Pancreas (tissue), 10 donors: ENCODE measurements at regions of chr19 and their contacts with region 1.

Region 1: DNA sequence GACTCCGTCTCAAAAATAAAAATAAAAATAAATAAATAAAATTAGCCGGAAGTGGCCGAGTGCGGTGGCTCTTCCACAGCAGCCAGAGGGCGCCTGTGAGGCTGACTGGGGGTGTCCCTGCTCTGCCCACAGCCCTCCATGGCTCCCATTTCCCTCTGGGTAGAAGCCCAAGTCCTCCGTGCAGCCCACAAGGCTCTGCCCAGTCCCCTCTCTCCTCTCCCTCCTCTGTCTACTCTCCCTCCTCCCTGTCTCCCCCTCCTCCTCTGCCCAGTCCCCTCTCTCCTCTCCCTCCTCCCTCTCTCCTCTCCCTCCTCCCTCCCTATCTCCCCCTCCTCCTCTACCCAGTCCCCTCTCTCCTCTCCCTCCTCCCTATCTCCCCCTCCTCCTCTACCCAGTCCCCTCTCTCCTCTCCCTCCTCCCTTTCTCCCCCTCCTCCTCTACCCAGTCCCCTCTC is 20.4 kb downstream of the MISP start:
- DNase-seq: peak in 2 of 6 donors; percentile 43 to 49
- ATAC-seq: no peak
- H3K4me3 ChIP-seq: no peak overlapping the region
- H3K27ac ChIP-seq: no peak overlapping the region
- H3K4me1 ChIP-seq: no peaks in the 10 kb centered on the region
- H3K27me3 ChIP-seq: no peaks in the 10 kb centered on the region
- CTCF ChIP-seq: no peak

Region 2: DNA sequence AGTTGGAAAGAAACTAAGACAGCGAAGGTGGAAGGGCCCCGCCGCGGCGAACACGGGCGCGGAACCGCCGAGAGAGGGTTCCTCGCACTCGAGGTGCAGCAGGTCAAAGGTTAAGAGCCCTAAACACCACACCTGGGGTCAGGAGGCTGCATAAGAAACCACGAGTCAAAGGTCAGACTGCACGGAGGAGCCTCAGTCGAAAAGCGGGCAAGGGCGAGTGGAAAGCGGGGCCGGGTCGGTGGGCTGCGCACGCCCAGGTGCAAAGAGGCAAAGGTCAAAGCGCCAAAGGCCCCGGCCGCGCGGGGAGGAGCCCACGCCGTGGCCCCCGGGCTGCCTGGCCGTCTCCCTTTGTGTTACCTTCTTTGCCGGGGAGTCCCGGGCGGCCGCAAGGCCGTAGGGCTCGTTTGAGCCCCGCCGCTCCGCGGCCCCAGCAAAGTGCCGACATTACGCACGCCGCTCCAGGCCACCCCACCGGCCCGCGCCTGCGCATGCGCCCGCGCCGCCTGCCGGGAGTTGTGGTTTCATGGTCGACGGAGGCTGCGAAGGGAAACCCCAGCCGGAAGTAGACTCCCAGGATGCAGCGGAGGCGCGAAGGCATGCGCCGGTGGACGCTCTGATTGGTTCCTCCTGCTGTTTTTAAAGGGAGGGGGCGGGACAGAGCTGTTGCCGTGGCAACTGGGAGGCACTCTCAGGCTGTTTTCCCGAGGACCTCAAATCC is 138.1 kb before region 1 on chr19 and contains the start of gene POLRMT:
- intact Hi-C with region 1: no loop called
- DNase-seq: peak; percentile 97 to 100 (median 98)
- ATAC-seq: peak; percentile 97 to 98 (median 98)
- H3K4me3 ChIP-seq: peak within 1 kb of the TSS; percentile 74 to 99 (median 84)
- H3K27ac ChIP-seq: no peak within 1 kb of the TSS
- H3K4me1 ChIP-seq: peaks cover 0 to 5% (median 4%) of the 10 kb centered on the region in 3 donors
- H3K27me3 ChIP-seq: no peaks in the 10 kb centered on the region
- CTCF ChIP-seq: no peak
- total RNA-seq, gene POLRMT: 19.3 to 34.7 (median 24.7) TPM

Region 3: DNA sequence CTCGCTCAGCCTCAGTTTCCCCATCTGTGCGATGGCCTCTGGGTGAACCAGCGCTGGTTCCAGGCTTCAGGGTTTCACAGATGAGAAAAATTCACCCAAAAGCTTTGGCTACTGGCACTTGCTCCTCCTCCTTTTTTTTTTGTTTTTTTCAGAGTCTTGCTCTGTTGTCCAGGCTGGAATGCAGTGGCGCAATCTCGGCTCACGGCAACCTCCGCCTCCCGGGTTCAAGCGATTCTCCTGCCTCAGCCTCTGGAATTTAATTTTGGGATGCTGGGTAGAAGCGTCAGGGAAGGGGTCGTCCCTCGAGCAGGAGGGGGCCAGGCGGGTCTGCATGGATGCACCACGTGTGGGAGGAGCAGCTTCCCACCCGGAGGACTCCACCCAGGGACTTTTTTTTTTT is 83.1 kb before region 1 on chr19:
- intact Hi-C with region 1: no loop called
- DNase-seq: no peak
- ATAC-seq: no peak
- H3K4me3 ChIP-seq: no peak overlapping the region
- H3K27ac ChIP-seq: no peak overlapping the region
- H3K4me1 ChIP-seq: no peaks in the 10 kb centered on the region
- H3K27me3 ChIP-seq: no peaks in the 10 kb centered on the region
- CTCF ChIP-seq: no peak

Region 4: DNA sequence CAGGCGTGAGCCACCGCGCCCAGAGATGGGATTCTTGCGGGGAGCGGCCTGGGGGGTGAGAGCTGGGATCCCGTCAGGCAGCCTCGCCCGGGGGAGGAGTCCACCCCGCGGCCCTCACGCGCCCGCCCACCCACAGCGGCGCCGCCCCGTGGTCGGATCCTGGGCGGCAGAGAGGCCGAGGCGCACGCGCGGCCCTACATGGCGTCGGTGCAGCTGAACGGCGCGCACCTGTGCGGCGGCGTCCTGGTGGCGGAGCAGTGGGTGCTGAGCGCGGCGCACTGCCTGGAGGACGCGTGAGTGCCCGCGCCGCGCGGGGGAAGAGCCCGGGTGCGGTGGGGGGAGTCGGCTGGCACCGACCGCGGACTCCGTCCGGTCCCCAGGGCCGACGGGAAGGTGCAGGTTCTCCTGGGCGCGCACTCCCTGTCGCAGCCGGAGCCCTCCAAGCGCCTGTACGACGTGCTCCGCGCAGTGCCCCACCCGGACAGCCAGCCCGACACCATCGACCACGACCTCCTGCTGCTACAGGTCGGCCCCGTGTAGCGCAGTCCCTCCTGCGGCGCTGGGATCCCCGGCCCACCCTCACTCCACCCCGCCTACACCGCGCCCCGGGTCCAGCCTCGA is 89.2 kb after region 1 on chr19:
- intact Hi-C with region 1: loop called in 1 of 3 experiments (anchors 5 kb)
- DNase-seq: peak in 4 of 6 donors; percentile 65 to 83 (median 74)
- ATAC-seq: peak; percentile 42 to 60 (median 50)
- H3K4me3 ChIP-seq: peak overlapping the region in 3 of 4 donors; percentile 18 to 42 (median 28)
- H3K27ac ChIP-seq: no peak overlapping the region
- H3K4me1 ChIP-seq: peaks cover 0 to 3% (median 0%) of the 10 kb centered on the region in 3 donors
- H3K27me3 ChIP-seq: no peaks in the 10 kb centered on the region
- CTCF ChIP-seq: no peak

Region 5: GRCh38 chr19:913080-913748 is 141.9 kb after region 1 on chr19 and contains the start of gene R3HDM4:
- intact Hi-C with region 1: loop called in 1 of 3 experiments (anchors 5 kb)
- DNase-seq: peak; percentile 74 to 94 (median 84)
- ATAC-seq: peak; percentile 75 to 86 (median 79)
- H3K4me3 ChIP-seq: peak within 1 kb of the TSS; percentile 57 to 71 (median 66)
- H3K27ac ChIP-seq: peak within 1 kb of the TSS; percentile 70 to 92 (median 85)
- H3K4me1 ChIP-seq: peaks cover 8 to 29% (median 15%) of the 10 kb centered on the region in 3 donors
- H3K27me3 ChIP-seq: peaks cover 0 to 3% (median 0%) of the 10 kb centered on the region in 4 donors
- CTCF ChIP-seq: no peak
- total RNA-seq, gene R3HDM4: 21.6 to 36.7 (median 29.2) TPM

Region 6: GRCh38 chr19:920051-920864 is 148.9 kb after region 1 on chr19:
- intact Hi-C with region 1: loop called in 1 of 3 experiments (anchors 2 kb)
- DNase-seq: peak in 4 of 6 donors; percentile 56 to 88 (median 64)
- ATAC-seq: peak; percentile 10 to 35 (median 28)
- H3K4me3 ChIP-seq: peak overlapping the region in 3 of 4 donors; percentile 7 to 31 (median 11)
- H3K27ac ChIP-seq: no peak overlapping the region
- H3K4me1 ChIP-seq: peaks cover 13 to 18% (median 15%) of the 10 kb centered on the region in 3 donors
- H3K27me3 ChIP-seq: peaks cover 0 to 10% (median 2%) of the 10 kb centered on the region in 4 donors
- CTCF ChIP-seq: no peak

Region 7: DNA sequence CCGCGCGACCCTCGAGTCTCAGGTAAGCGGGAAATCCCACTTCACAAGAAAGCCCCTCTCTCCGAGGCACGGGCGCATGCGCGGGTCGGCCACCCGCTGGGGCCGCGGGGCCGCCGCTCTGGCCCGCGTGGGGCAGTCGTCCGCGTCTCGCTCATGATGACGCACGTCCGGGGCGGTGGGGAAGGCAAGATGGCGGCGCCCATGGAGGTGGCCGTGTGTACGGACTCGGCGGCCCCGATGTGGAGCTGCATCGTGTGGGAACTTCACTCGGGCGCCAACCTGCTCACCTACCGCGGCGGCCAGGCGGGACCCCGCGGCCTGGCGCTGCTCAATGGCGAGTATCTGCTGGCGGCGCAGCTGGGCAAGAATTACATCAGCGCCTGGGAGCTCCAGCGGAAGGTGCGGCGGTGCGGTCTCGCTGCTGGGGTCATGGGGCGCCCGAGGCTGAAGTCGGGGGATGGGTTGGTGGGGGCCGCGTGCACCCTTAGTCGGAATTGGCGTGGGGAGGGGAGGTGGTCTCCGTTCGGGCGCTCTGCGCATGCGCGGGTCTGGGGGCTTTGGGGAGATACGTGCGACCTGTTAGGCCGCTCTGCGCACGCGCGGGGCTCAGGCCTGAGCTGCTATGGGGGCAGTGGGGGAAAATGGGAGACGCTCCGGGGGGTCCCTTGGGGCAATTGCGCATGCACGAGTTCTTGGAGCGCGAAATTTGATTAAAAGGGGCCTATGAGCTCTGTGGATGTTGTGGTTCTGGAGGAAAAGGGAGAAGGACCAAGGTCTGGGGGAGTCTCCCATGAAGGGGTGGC is 213.0 kb after region 1 on chr19 and contains the start of gene WDR18:
- intact Hi-C with region 1: loop called in 1 of 3 experiments (anchors 10 kb)
- DNase-seq: peak; percentile 91 to 98 (median 94)
- ATAC-seq: peak; percentile 93 to 96 (median 96)
- H3K4me3 ChIP-seq: peak within 1 kb of the TSS; percentile 76 to 96 (median 91)
- H3K27ac ChIP-seq: peak within 1 kb of the TSS; percentile 65 to 81 (median 71)
- H3K4me1 ChIP-seq: peaks cover 0 to 15% (median 4%) of the 10 kb centered on the region in 3 donors
- H3K27me3 ChIP-seq: no peaks in the 10 kb centered on the region
- CTCF ChIP-seq: peak in 1 of 4 donors; percentile 20
- total RNA-seq, gene WDR18: 12.3 to 26.2 (median 19.0) TPM

Region 8: GRCh38 chr19:1295169-1296012 is 524.0 kb after region 1 on chr19:
- intact Hi-C with region 1: no loop called
- DNase-seq: peak in 2 of 6 donors; percentile 46 to 81
- ATAC-seq: peak in 3 of 4 donors; percentile 11 to 51 (median 23)
- H3K4me3 ChIP-seq: peak overlapping the region in 1 of 4 donors; percentile 25
- H3K27ac ChIP-seq: no peak overlapping the region
- H3K4me1 ChIP-seq: no peaks in the 10 kb centered on the region
- H3K27me3 ChIP-seq: peaks cover 0 to 11% (median 5%) of the 10 kb centered on the region in 4 donors
- CTCF ChIP-seq: no peak